Mucosa of descending colon (tissue), 3 donors: ENCODE measurements at regions of chr1 and their contacts with region 1.

Region 1: DNA sequence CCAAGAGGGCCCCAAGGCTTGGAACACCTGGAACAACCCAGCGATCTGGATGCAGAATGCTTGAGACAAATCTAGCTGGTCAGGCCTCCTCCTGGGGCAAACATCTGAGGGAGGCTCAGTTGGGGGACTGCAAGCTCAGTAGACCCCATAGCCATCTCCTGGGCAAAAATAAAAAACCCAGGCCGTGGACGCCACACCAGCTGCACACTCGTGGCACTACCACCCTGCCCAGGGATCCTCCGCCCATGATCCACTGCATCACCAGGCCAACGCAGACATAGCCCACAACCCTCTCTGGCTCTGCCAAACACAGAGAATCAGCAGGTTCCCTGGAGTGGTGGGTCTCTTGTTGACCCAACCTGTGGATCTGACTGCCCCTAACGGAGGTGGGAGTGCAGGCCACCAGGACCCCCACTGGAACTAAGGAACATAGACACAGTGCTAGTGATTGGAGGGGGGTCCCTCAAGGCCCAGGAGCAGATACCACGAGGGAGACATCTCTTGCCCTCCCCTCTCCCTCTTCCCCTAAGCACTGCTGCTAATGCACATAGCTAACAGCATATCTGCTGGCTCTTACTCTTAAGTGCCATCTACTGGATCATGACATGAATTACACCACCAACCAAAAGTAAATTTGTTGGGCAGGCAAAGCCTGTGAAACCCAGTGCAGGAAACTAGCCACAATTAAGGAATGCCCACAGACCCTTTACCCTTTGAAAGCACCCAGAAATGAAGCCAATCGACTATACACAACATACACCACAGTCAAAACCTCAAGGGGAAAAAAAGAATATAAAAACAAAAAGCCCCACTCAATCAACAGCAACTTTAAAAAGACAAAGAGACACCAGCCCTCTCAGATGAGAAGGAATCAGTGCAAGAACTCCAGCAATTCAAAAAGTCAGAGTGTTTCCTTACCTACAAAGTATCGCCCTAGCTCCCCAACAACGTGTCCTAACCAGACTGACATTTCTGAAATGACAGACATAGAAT is 147.3 kb downstream of the CHD1L start:
- DNase-seq: peak in 2 of 3 donors; percentile 16 to 18
- ATAC-seq: peak; percentile 80
- H3K4me3 ChIP-seq: no peak overlapping the region
- H3K4me1 ChIP-seq: no peaks in the 10 kb centered on the region
- CTCF ChIP-seq: peak; percentile 34

Region 2: DNA sequence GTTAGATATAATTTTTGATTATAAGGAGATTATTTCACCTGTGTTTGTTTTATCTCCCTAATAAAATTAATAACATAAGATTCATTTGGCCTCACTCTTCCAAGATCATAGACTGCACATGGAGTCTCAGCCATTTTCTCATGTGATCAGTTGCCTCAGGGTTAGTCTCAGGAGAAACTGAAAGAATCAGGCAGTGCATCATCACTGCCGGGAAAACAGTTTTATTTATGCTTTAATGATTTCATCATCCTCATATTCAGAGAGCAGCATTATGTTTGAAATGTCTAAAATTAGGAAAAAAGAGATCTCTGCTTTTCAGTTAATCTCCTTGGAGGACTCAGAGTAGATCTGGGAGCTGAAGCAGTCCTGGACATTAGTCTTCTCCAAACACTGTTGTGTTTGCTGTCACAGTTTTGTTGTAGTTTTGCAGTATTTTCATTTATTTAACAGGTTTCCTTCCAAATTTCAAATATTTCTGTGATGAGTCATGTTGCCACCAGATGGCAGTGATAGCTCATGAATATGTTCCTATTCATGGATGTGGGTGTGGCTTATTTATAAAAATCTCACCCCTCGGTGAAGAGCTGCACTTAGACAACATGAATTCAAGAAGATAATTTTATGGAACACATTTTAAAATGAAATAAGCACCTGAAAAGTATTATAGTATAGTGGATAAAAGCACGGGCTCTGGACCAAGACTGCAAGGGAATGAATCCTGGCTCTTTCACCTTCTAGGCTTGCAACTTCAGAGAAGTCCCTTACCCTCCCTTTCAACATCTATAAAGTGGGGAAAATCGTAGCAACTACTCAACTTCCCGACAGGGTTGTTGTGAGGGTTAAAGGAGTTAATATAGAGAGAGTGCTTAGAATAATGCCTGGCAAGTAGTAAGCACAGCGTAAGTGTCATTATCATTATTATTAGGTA is 116.2 kb before region 1 on chr1:
- intact Hi-C with region 1: loop called in 1 of 2 experiments (anchors 10 kb)
- DNase-seq: peak in 1 of 3 donors; percentile 60
- ATAC-seq: peak; percentile 62
- H3K4me3 ChIP-seq: no peak overlapping the region
- H3K4me1 ChIP-seq: no peaks in the 10 kb centered on the region
- CTCF ChIP-seq: no peak